ENCODE measurements at regions of chr9 and their contacts with region 1.

Region 1: GRCh38 chr9:22590336-22591033 is 143.9 kb downstream of the DMRTA1 start:
- DNase-seq: no peak
- ATAC-seq: no peak
- H3K4me3 Mint-ChIP-seq: no peak overlapping the region
- H3K27ac Mint-ChIP-seq: no peak overlapping the region
- H3K4me1 Mint-ChIP-seq: no peaks in the 10 kb centered on the region
- H3K27me3 Mint-ChIP-seq: no peaks in the 10 kb centered on the region
- CTCF ChIP-seq: no peak

Region 2: GRCh38 chr9:22307013-22307711 is 283.3 kb before region 1 on chr9:
- CTCF ChIA-PET with region 1: no interaction called
- POLR2A ChIA-PET with region 1: no interaction called
- intact Hi-C with region 1: loop called (anchors 10 kb)
- DNase-seq: peak; percentile 28
- ATAC-seq: no peak
- H3K4me3 Mint-ChIP-seq: no peak overlapping the region
- H3K27ac Mint-ChIP-seq: no peak overlapping the region
- H3K4me1 Mint-ChIP-seq: no peaks in the 10 kb centered on the region
- H3K27me3 Mint-ChIP-seq: peaks cover 2% of the 10 kb centered on the region
- CTCF ChIP-seq: no peak

Measured in activated CD8-positive, alpha-beta T cell treated with anti-CD3 and anti-CD28 coated beads for 36 hours (primary cell).